ENCODE measurements at regions of chr1 and their contacts with region 1.

Region 1: DNA sequence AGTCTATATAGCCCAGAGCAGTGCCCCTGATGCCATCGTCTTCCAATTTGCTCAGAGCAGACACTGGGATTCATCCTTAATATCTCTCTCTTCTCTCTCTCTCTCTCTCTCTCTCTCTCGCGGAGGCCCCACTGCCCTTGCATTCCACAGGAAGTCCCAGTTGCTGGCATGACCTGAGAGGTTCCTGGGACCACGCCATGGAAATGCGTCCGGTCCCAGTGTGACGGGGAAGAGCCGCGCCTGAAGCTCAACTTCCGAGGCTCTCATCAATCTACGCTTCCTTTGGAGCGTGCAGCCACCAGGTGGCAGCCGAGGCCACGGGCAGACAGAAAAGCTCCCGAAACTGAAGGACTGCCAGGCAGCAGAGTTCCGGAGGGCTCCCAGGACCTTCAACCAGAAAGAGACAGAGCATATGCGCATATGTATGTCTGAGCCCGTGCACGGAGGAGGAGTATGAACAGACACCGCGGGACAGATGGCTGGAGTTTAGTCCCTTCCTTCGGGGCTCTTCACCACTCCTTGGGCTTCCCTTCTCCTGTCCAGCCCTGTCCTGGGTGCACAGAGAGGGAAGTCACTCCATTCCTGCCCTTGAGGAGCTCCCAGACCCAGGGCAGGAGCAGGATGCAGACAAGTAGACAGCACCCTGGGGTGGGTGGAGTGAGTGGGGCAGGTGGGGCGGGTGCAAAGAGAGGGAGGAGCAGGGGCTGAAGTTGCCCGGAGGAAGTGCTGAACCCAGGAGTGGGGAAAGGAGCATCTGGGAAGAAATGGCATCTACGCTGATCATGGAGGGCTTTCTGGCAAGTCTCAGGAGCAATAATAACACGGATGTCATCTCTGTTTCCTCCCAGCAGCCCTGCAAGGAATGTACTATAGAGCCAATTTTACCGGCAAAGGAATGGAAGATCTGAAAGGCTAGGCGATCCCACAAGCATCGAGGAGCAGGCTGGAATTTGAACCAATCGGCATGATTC is 10.5 kb downstream of the PDZK1IP1 start:
- DNase-seq: peak; percentile 84
- H3K4me3 ChIP-seq: peak overlapping the region; percentile 55 to 77
- H3K27ac ChIP-seq: peak overlapping the region in 1 of 2 experiments; percentile 53; a peak in 2 of 4 replicates
- H3K4me1 ChIP-seq: peaks cover 4 to 16% of the 10 kb centered on the region in 2 experiments; a peak in 1 of 4 replicates
- H3K27me3 ChIP-seq: no peaks in the 10 kb centered on the region
- CTCF ChIP-seq: peak; percentile 94
- EP300 ChIP-seq: no peak
- RAD21 ChIP-seq: peak; percentile 84

Region 2: GRCh38 chr1:47067097-47067594 is 112.2 kb before region 1 on chr1 and contains the start of gene CYP4Z1:
- CTCF ChIA-PET with region 1: no interaction called
- POLR2A ChIA-PET with region 1: no interaction called
- DNase-seq: no peak
- H3K4me3 ChIP-seq: no peak within 1 kb of the TSS
- H3K27ac ChIP-seq: no peak within 1 kb of the TSS
- H3K4me1 ChIP-seq: no peaks in the 10 kb centered on the region
- H3K27me3 ChIP-seq: no peaks in the 10 kb centered on the region
- CTCF ChIP-seq: no peak
- EP300 ChIP-seq: no peak
- RAD21 ChIP-seq: no peak
- polyA plus RNA-seq, gene CYP4Z1: not detected in 2 replicates

Region 3: DNA sequence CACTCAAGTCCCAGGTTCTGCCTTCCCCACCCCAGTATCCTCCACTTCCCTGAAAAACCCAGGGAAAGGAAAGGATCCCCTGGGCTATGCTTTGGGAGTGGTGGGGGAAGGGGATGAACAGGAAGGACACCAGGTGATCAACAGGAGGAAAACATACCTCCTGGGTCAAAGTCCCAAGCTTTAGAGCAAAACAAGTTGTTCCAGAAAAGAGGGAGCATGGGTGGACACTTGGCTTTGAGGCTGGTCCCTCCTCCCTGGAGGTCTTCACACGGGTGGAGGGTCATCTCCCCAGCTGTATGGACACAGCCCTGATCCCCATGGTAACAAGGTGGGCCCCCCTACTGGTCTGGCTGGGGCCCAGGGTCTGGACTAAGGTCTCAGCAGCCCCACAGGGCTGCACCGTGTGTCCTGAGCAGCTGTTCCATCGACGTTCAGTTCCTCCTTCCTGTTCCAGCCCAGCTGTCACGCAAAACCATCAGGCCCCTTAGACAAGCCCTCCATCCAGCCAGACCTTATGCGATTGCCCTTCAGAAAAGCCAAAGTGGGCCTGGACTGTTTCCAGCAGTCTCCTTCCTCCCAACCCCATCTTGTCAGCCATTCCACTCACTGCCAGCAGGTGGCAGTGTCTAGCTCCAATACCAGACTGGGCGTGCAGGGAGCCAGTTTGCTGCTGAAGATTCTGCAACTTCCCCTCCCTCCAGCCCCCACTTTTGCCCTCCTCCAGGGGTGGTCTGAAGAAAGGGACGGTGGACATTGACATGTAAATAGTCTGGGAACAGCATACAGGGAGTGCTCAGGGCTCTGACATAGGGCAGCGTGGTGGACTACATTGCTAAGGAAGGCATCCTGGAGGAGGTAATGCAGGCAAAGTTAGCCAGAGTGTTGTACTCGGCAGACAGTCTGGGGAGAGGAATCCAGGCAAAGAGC is 13.4 kb after region 1 on chr1:
- CTCF ChIA-PET with region 1: interaction called, 143 read pairs
- POLR2A ChIA-PET with region 1: interaction called, 3 read pairs
- DNase-seq: peak; percentile 78
- H3K4me3 ChIP-seq: no peak overlapping the region
- H3K27ac ChIP-seq: no peak overlapping the region
- H3K4me1 ChIP-seq: peaks cover 0 to 3% of the 10 kb centered on the region in 2 experiments; a peak in 1 of 4 replicates
- H3K27me3 ChIP-seq: peaks cover 5% of the 10 kb centered on the region
- CTCF ChIP-seq: peak; percentile 96
- EP300 ChIP-seq: no peak
- RAD21 ChIP-seq: peak; percentile 77

Region 4: GRCh38 chr1:47201179-47201578 is 21.9 kb after region 1 on chr1:
- CTCF ChIA-PET with region 1: interaction called, 143 read pairs
- POLR2A ChIA-PET with region 1: no interaction called
- DNase-seq: no peak
- H3K4me3 ChIP-seq: no peak overlapping the region
- H3K27ac ChIP-seq: no peak overlapping the region
- H3K4me1 ChIP-seq: no peaks in the 10 kb centered on the region
- H3K27me3 ChIP-seq: peaks cover 34% of the 10 kb centered on the region
- CTCF ChIP-seq: no peak
- EP300 ChIP-seq: no peak
- RAD21 ChIP-seq: no peak

Region 5: DNA sequence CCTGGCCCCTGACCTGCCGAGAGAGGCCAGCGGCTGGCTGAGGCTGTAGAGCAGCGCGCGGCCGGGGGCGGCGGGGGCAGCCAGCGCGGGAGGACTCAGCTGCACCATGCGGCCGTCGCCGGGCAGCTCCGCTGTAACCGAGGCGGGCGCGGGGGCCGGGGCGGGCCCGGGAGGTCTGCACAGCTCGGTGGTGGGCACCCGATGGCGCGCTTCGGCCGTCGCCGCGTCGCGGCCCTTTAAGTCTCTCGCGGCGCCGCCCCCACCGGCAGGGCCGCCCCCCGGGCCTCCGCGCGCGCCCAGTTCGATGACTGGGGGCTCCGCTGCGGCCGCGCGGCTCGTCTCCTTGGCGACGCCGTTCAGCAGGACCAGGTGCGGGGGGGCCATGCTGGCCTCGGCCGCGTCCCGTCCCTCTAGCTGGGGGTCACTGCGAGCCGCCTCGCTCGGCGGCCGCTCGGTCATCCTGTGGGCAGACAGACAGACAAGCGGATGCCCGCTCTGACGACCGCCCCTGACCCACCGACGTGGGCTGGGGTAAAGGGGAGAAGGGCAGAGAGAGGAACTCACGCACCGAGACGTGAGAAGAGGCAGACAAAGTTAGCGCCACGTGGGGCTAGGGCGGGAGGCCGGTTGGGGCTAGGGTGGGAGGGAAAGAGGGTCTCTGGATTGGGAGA is 46.3 kb after region 1 on chr1:
- CTCF ChIA-PET with region 1: interaction called, 10 read pairs
- POLR2A ChIA-PET with region 1: interaction called, 3 read pairs
- DNase-seq: peak; percentile 74
- H3K4me3 ChIP-seq: peak overlapping the region in 1 of 2 experiments; percentile 34; a peak in 2 of 4 replicates
- H3K27ac ChIP-seq: no peak overlapping the region
- H3K4me1 ChIP-seq: peaks cover 0 to 4% of the 10 kb centered on the region in 2 experiments; a peak in 1 of 4 replicates
- H3K27me3 ChIP-seq: peaks cover 99% of the 10 kb centered on the region
- CTCF ChIP-seq: no peak
- EP300 ChIP-seq: no peak
- RAD21 ChIP-seq: no peak

Region 6: GRCh38 chr1:47424336-47424982 is 245.2 kb after region 1 on chr1:
- CTCF ChIA-PET with region 1: interaction called, 22 read pairs
- POLR2A ChIA-PET with region 1: no interaction called
- DNase-seq: peak; percentile 65
- H3K4me3 ChIP-seq: no peak overlapping the region
- H3K27ac ChIP-seq: no peak overlapping the region
- H3K4me1 ChIP-seq: no peaks in the 10 kb centered on the region
- H3K27me3 ChIP-seq: peaks cover 18% of the 10 kb centered on the region; the same call in 1 of the 2 replicates
- CTCF ChIP-seq: peak; percentile 81
- EP300 ChIP-seq: no peak
- RAD21 ChIP-seq: peak; percentile 61